Calu3 (cell line): ENCODE measurements at regions of chr1 and their contacts with region 1.

Region 1: GRCh38 chr1:16078925-16079656 is 5.6 kb upstream of the FAM131C start:
- DNase-seq: peak; percentile 80
- H3K4me3 Mint-ChIP-seq: no peak overlapping the region
- H3K27ac Mint-ChIP-seq: no peak overlapping the region
- H3K4me1 Mint-ChIP-seq: peaks cover 30% of the 10 kb centered on the region
- H3K27me3 Mint-ChIP-seq: no peaks in the 10 kb centered on the region
- CTCF ChIP-seq: peak; percentile 73

Region 2: GRCh38 chr1:15578921-15579682 is 500.0 kb before region 1 on chr1:
- CTCF ChIA-PET with region 1: no interaction called
- intact Hi-C with region 1: no loop called
- DNase-seq: no peak
- H3K4me3 Mint-ChIP-seq: no peak overlapping the region
- H3K27ac Mint-ChIP-seq: no peak overlapping the region
- H3K4me1 Mint-ChIP-seq: no peaks in the 10 kb centered on the region
- H3K27me3 Mint-ChIP-seq: no peaks in the 10 kb centered on the region
- CTCF ChIP-seq: no peak

Region 3: DNA sequence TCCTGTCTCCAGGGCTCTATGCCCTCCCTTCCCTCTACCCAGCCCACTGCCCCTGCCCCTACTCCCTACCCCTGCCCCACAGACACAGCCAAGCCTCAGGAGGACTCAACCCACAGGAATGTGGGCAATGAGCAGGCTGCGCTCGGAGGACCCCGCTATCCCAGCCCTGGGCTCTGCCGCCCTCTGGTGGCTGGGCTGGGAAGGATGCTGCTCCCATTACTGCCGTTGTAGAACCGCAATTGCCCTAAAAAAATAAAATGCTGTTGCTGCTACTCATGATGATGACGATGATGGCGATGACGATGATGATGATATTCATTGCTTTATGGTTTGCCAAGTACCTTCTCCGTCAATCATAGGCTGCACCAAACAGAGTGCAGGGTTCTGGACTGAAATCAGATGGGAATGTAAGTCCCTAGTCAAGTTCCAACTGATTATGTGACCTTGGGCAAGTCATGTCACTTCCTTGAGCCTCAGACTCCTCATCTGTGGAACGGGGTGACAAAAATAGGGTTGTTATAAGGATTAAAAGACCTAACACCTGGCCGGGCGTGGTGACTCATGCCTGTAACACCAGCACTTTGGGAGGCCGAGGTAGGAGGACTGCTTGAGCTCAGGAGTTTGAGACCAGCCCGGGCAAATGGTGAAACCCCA is 108.8 kb after region 1 on chr1:
- CTCF ChIA-PET with region 1: interaction called, 19 read pairs
- intact Hi-C with region 1: loop called (anchors 1 kb)
- DNase-seq: peak; percentile 81
- H3K4me3 Mint-ChIP-seq: no peak overlapping the region
- H3K27ac Mint-ChIP-seq: no peak overlapping the region
- H3K4me1 Mint-ChIP-seq: peaks cover 31% of the 10 kb centered on the region
- H3K27me3 Mint-ChIP-seq: peaks cover 8% of the 10 kb centered on the region
- CTCF ChIP-seq: peak; percentile 85

Region 4: GRCh38 chr1:16243936-16244649 is 165.0 kb after region 1 on chr1:
- CTCF ChIA-PET with region 1: interaction called, 7 read pairs
- intact Hi-C with region 1: loop called (anchors 2 kb)
- DNase-seq: peak; percentile 71
- H3K4me3 Mint-ChIP-seq: no peak overlapping the region
- H3K27ac Mint-ChIP-seq: no peak overlapping the region
- H3K4me1 Mint-ChIP-seq: peaks cover 17% of the 10 kb centered on the region
- H3K27me3 Mint-ChIP-seq: no peaks in the 10 kb centered on the region
- CTCF ChIP-seq: peak; percentile 63